ENCODE measurements at regions of chr6 and their contacts with region 1.

Region 1: GRCh38 chr6:27893059-27893835 is 18.9 kb downstream of the OR2B2 start:
- DNase-seq: peak; percentile 71 to 80 (median 74)
- ATAC-seq: peak; percentile 27 to 78 (median 64)
- H3K4me3 ChIP-seq: peak overlapping the region; percentile 33 to 89 (median 74)
- H3K27ac ChIP-seq: peak overlapping the region in 10 of 12 donors; percentile 18 to 91 (median 33)
- H3K4me1 ChIP-seq: peaks cover 0 to 36% (median 18%) of the 10 kb centered on the region in 12 donors
- H3K27me3 ChIP-seq: peaks cover 0 to 50% (median 20%) of the 10 kb centered on the region in 9 donors
- CTCF ChIP-seq: no peak
- POLR2A ChIP-seq: peak in 1 of 2 donors; percentile 82

Region 2: GRCh38 chr6:27157459-27158315 is 735.6 kb before region 1 on chr6:
- intact Hi-C with region 1: loop called in 4 of 10 experiments (anchors 5 to 10 kb)
- DNase-seq: peak; percentile 54 to 80 (median 67)
- ATAC-seq: peak in 3 of 4 donors; percentile 68 to 77 (median 75)
- H3K4me3 ChIP-seq: peak overlapping the region in 11 of 12 donors; percentile 2 to 61 (median 46)
- H3K27ac ChIP-seq: no peak overlapping the region
- H3K4me1 ChIP-seq: peaks cover 0 to 29% (median 8%) of the 10 kb centered on the region in 12 donors
- H3K27me3 ChIP-seq: peaks cover 0 to 11% (median 0%) of the 10 kb centered on the region in 9 donors
- CTCF ChIP-seq: peak in 11 of 12 donors; percentile 20 to 73 (median 48)
- POLR2A ChIP-seq: no peak

Region 3: GRCh38 chr6:27472617-27473400 is 420.4 kb before region 1 on chr6 and contains the start of gene ZNF184:
- intact Hi-C with region 1: loop called in 4 of 10 experiments (anchors 2 to 10 kb)
- DNase-seq: peak; percentile 95 to 96 (median 96)
- ATAC-seq: peak; percentile 99 to 100 (median 100)
- H3K4me3 ChIP-seq: peak within 1 kb of the TSS; percentile 52 to 99 (median 86)
- H3K27ac ChIP-seq: peak within 1 kb of the TSS; percentile 34 to 92 (median 86)
- H3K4me1 ChIP-seq: peaks cover 0 to 37% (median 19%) of the 10 kb centered on the region in 12 donors
- H3K27me3 ChIP-seq: no peaks in the 10 kb centered on the region
- CTCF ChIP-seq: peak in 3 of 12 donors; percentile 2 to 29 (median 24)
- POLR2A ChIP-seq: peak in 1 of 2 donors; percentile 78
- total RNA-seq, gene ZNF184: 3.2 to 6.5 (median 4.0) TPM

Region 4: GRCh38 chr6:27753668-27754407 is 139.4 kb before region 1 on chr6:
- intact Hi-C with region 1: loop called in 1 of 10 experiments (anchors 2 kb)
- DNase-seq: peak; percentile 37 to 81 (median 56)
- ATAC-seq: peak in 2 of 4 donors; percentile 67 to 77
- H3K4me3 ChIP-seq: peak overlapping the region in 10 of 12 donors; percentile 61 to 88 (median 69)
- H3K27ac ChIP-seq: no peak overlapping the region
- H3K4me1 ChIP-seq: peaks cover 0 to 23% (median 7%) of the 10 kb centered on the region in 12 donors
- H3K27me3 ChIP-seq: peaks cover 5 to 30% (median 20%) of the 10 kb centered on the region in 9 donors
- CTCF ChIP-seq: peak in 1 of 12 donors; percentile 7
- POLR2A ChIP-seq: peak in 1 of 2 donors; percentile 7

Region 5: DNA sequence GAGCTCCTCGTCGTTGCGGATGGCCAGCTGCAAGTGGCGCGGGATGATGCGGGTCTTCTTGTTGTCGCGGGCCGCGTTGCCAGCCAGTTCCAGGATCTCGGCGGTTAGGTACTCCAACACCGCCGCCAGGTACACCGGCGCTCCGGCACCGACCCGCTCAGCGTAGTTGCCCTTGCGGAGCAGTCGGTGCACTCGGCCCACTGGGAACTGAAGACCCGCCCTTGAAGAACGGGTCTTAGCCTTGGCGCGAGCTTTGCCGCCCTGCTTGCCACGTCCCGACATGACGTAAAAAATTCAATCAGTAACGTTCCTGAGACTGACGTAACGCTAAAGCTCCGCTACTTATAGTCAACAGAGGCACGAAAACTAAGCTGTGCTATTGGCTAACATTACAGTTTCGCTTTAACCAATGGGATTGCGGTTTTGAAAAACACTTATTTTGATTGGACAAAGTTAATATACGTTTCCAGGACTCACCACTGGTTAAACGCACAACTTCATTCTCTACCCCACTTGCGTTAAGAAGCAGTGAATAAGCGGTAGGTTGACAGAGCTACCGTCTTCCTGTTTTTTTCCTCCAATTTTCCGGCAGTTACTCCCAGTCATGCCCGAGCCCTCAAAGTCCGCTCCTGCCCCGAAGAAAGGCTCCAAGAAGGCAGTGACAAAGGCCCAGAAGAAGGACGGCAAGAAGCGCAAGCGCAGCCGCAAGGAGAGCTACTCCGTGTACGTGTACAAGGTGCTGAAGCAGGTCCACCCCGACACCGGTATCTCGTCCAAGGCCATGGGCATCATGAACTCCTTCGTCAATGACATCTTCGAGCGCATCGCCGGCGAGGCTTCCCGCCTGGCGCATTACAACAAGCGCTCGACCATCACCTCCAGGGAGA is 54.9 kb before region 1 on chr6:
- intact Hi-C with region 1: loop called in 4 of 10 experiments (anchors 2 to 5 kb)
- DNase-seq: peak; percentile 74 to 85 (median 76)
- ATAC-seq: peak; percentile 93 to 95 (median 95)
- H3K4me3 ChIP-seq: peak overlapping the region; percentile 62 to 87 (median 76)
- H3K27ac ChIP-seq: peak overlapping the region; percentile 88 to 98 (median 95)
- H3K4me1 ChIP-seq: peaks cover 0 to 33% (median 20%) of the 10 kb centered on the region in 12 donors
- H3K27me3 ChIP-seq: no peaks in the 10 kb centered on the region
- CTCF ChIP-seq: peak in 1 of 12 donors; percentile 11
- POLR2A ChIP-seq: peak; percentile 4 to 90

Measured in heart left ventricle (tissue), 16 donors.